Activated CD8-positive, alpha-beta T cell treated with anti-CD3 and anti-CD28 coated beads, Interleukin-2, amount 10 ng/mL, durations not matched to agents 7 days and 5 days (primary cell): ENCODE measurements at regions of chr10 and their contacts with region 1.

Region 1: GRCh38 chr10:63629363-63630084 is 108.3 kb downstream of the REEP3 start:
- DNase-seq: peak; percentile 88
- ATAC-seq: peak; percentile 66
- H3K4me3 Mint-ChIP-seq: peak overlapping the region; percentile 86
- H3K27ac Mint-ChIP-seq: peak overlapping the region; percentile 89
- H3K4me1 Mint-ChIP-seq: peaks cover 46% of the 10 kb centered on the region
- H3K27me3 Mint-ChIP-seq: peaks cover 9% of the 10 kb centered on the region

Region 2: DNA sequence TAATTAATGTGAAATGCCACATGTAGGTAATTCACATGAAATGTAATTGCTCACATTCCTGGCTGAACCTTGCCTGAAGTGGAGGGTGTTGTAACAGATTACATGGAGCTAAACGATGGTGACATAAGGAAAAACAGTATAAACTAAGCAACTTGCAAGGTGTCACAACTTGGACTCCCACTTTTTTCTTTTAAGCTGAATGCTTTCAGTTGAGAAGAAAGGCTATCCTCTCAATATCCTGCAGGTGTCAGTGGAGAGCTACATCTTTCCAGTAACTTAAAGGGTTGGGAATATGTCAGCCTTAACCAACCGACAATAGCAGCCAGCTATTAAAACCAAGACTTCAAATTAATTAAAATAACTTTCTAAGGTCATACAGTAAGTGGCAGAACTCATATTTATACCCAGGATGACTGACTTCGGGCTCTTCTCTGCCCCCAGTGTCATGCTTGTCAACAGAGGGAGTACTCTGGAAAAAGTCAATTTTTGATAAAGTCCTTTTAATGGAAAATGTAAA is 462.7 kb before region 1 on chr10:
- CTCF ChIA-PET with region 1: interaction called, 116 read pairs
- POLR2A ChIA-PET with region 1: interaction called, 4 read pairs
- DNase-seq: peak; percentile 57
- ATAC-seq: peak; percentile 45
- H3K4me3 Mint-ChIP-seq: no peak overlapping the region
- H3K27ac Mint-ChIP-seq: no peak overlapping the region
- H3K4me1 Mint-ChIP-seq: peaks cover 43% of the 10 kb centered on the region
- H3K27me3 Mint-ChIP-seq: no peaks in the 10 kb centered on the region

Region 3: DNA sequence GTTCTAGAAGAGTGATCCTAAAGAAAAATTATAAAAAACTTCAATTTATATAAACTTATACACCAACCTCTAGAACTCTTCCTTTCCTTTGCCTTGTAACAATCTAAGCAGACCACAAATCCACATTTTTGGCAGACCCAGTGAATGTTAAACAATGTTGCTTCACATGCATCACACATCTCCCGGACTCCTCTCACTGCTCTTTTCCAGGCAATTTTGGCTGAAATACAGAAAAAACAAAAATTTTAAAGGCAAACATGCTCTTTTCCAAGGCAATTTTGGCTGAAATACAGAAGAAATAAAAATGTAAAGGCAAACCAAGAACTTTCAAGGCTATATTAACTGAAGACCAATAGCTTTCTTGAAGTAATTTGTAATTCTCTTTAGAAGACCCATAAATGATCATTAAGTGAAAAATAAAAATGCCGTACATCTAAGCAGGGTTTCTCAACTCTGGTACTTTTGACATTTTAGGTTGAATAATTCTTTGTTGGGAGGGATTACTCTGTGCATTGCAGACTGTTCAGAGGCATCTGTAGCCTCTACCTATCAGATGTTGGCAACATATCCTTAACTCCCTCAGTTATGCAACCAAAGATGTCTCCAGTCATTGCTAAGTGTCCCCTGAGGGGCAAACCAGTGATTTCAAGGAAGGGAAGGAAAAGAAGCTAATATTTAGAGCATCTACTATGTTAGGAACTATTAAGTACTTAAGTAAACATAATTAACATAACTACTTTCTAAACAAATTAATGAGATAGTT is 432.0 kb before region 1 on chr10:
- CTCF ChIA-PET with region 1: interaction called, 18 read pairs
- POLR2A ChIA-PET with region 1: no interaction called
- DNase-seq: no peak
- ATAC-seq: no peak
- H3K4me3 Mint-ChIP-seq: no peak overlapping the region
- H3K27ac Mint-ChIP-seq: no peak overlapping the region
- H3K4me1 Mint-ChIP-seq: peaks cover 3% of the 10 kb centered on the region
- H3K27me3 Mint-ChIP-seq: no peaks in the 10 kb centered on the region

Region 4: GRCh38 chr10:63217120-63217605 is 412.4 kb before region 1 on chr10:
- CTCF ChIA-PET with region 1: interaction called, 50 read pairs
- POLR2A ChIA-PET with region 1: no interaction called
- DNase-seq: peak; percentile 46
- ATAC-seq: peak; percentile 81
- H3K4me3 Mint-ChIP-seq: no peak overlapping the region
- H3K27ac Mint-ChIP-seq: no peak overlapping the region
- H3K4me1 Mint-ChIP-seq: peaks cover 45% of the 10 kb centered on the region
- H3K27me3 Mint-ChIP-seq: no peaks in the 10 kb centered on the region

Region 5: DNA sequence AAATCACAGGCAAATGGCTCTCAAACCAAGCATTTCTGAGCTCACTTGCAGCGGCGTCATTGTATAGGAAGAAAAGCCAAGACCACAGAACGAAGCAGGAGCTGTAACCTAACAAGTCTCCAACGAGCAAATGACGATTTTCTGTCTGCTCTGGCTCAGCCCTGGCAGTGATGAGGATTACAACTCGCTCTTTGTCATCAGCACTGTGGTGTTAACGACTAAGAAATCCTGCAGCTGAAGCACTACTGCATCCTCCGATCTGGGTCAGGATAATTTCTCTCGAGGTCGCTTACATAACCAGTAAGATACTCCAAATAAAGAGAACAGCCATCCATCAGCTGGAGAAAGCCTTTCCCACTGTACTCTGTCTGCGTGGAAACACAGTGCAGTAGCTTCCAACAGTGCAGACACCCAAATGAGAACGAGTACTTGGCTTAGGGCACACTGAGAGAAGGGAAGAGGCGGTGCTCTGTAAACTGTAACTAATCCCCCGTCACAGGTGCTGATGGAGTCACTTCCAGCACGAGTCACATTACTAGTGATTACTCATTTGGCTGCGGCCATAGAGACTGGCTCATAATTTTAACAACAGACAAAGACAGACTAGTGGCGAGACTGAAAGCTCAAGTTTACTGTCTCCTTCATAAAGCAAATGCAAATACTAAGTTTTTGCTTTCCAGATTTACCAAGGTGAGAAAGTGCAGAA is 360.6 kb before region 1 on chr10:
- CTCF ChIA-PET with region 1: interaction called, 35 read pairs
- POLR2A ChIA-PET with region 1: interaction called, 31 read pairs
- DNase-seq: peak; percentile 91
- ATAC-seq: peak; percentile 94
- H3K4me3 Mint-ChIP-seq: peak overlapping the region; percentile 97
- H3K27ac Mint-ChIP-seq: peak overlapping the region; percentile 99
- H3K4me1 Mint-ChIP-seq: peaks cover 18% of the 10 kb centered on the region
- H3K27me3 Mint-ChIP-seq: no peaks in the 10 kb centered on the region

Region 6: GRCh38 chr10:63521416-63522276 is 107.9 kb before region 1 on chr10:
- CTCF ChIA-PET with region 1: interaction called, 16 read pairs
- POLR2A ChIA-PET with region 1: interaction called, 4 read pairs
- DNase-seq: peak; percentile 56
- ATAC-seq: peak; percentile 77
- H3K4me3 Mint-ChIP-seq: peak overlapping the region; percentile 87
- H3K27ac Mint-ChIP-seq: peak overlapping the region; percentile 91
- H3K4me1 Mint-ChIP-seq: peaks cover 61% of the 10 kb centered on the region
- H3K27me3 Mint-ChIP-seq: no peaks in the 10 kb centered on the region

Region 7: GRCh38 chr10:63720072-63720537 is 90.6 kb after region 1 on chr10:
- CTCF ChIA-PET with region 1: interaction called, 116 read pairs
- POLR2A ChIA-PET with region 1: interaction called, 5 read pairs
- DNase-seq: peak; percentile 65
- ATAC-seq: peak; percentile 62
- H3K4me3 Mint-ChIP-seq: peak overlapping the region; percentile 12
- H3K27ac Mint-ChIP-seq: no peak overlapping the region
- H3K4me1 Mint-ChIP-seq: peaks cover 16% of the 10 kb centered on the region
- H3K27me3 Mint-ChIP-seq: peaks cover 3% of the 10 kb centered on the region

Region 8: DNA sequence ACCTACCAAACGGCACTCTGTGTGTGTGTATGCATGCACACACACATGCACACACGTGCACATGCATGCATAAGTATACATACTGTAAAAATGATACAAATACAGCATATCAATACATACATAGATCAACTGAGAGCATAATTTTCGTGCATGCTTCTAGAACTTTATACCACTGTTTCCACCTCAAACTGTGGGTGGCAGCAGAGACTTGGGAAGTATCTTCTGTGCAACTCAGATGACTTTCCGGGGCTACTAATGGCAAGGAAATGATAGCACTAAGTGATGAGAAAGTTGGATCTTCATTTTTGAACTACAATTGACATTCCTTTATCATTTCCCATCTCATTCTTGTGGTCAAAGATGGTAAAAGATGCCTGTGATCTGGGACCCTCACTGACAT is 462.4 kb after region 1 on chr10:
- CTCF ChIA-PET with region 1: no interaction called
- POLR2A ChIA-PET with region 1: no interaction called
- DNase-seq: no peak
- ATAC-seq: no peak
- H3K4me3 Mint-ChIP-seq: no peak overlapping the region
- H3K27ac Mint-ChIP-seq: no peak overlapping the region
- H3K4me1 Mint-ChIP-seq: no peaks in the 10 kb centered on the region
- H3K27me3 Mint-ChIP-seq: no peaks in the 10 kb centered on the region